ENCODE measurements at regions of chr12 and their contacts with region 1.

Region 1: GRCh38 chr12:110449799-110450497 is at the start of gene ARPC3:
- DNase-seq: peak; percentile 92
- H3K4me3 ChIP-seq: peak within 1 kb of the TSS; percentile 59 to 85 (median 83)
- H3K27ac ChIP-seq: peak within 1 kb of the TSS; percentile 89
- H3K4me1 ChIP-seq: peaks cover 5% of the 10 kb centered on the region
- H3K27me3 ChIP-seq: no peaks in the 10 kb centered on the region
- CTCF ChIP-seq: peak; percentile 87 to 89
- POLR2A ChIP-seq: peak; percentile 86
- total RNA-seq, gene ARPC3: 304 and 308 TPM in 2 replicates

Region 2: GRCh38 chr12:110039085-110039807 is 410.7 kb before region 1 on chr12:
- CTCF ChIA-PET with region 1: no interaction called
- POLR2A ChIA-PET with region 1: no interaction called
- dilution Hi-C with region 1: no loop called
- intact Hi-C with region 1: no loop called
- DNase-seq: peak; percentile 74
- H3K4me3 ChIP-seq: no peak overlapping the region
- H3K27ac ChIP-seq: peak overlapping the region; percentile 90
- H3K4me1 ChIP-seq: peaks cover 29% of the 10 kb centered on the region
- H3K27me3 ChIP-seq: no peaks in the 10 kb centered on the region
- CTCF ChIP-seq: no peak
- POLR2A ChIP-seq: no peak

Region 3: DNA sequence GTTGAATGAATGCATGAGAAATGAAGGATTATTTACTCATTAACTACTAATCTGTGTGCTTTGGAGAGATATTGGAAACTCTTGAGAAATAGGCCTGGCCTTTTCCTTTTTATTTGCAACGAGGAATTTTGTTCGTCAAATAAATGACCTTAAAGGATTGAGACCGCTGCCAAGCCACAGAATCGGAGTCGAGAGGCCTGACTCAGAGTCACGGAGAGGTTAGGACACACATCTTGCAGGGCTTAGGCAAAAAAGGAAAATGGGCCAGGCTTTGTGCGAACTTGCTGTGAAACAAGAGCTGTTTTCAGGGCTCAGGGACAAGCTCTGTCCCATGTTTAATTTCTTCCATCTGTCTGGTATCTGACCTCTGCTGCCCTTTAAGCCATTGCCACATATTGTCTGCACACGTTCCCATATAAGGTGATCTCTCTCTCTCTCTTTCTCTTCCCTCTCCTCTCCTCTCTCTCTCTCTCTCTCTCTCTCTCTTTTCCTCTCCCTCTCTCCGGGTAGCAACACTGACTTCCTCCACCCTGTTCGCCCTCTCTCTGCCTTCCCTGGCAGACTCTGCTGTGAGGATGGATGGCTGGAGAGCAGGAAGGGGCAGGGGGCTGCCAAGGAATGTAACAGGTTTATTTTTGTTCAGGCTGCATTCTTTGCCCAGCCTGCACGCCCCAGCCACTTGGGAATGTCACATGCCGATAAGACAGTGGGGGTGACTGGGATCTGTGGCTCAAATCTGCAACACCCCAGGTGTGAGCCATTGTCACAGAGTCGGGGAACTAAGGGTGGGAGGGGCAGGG is 340.7 kb before region 1 on chr12:
- CTCF ChIA-PET with region 1: no interaction called
- POLR2A ChIA-PET with region 1: no interaction called
- dilution Hi-C with region 1: no loop called
- intact Hi-C with region 1: no loop called
- DNase-seq: peak; percentile 81
- H3K4me3 ChIP-seq: no peak overlapping the region
- H3K27ac ChIP-seq: no peak overlapping the region
- H3K4me1 ChIP-seq: peaks cover 15% of the 10 kb centered on the region
- H3K27me3 ChIP-seq: no peaks in the 10 kb centered on the region
- CTCF ChIP-seq: no peak
- POLR2A ChIP-seq: no peak

Region 4: DNA sequence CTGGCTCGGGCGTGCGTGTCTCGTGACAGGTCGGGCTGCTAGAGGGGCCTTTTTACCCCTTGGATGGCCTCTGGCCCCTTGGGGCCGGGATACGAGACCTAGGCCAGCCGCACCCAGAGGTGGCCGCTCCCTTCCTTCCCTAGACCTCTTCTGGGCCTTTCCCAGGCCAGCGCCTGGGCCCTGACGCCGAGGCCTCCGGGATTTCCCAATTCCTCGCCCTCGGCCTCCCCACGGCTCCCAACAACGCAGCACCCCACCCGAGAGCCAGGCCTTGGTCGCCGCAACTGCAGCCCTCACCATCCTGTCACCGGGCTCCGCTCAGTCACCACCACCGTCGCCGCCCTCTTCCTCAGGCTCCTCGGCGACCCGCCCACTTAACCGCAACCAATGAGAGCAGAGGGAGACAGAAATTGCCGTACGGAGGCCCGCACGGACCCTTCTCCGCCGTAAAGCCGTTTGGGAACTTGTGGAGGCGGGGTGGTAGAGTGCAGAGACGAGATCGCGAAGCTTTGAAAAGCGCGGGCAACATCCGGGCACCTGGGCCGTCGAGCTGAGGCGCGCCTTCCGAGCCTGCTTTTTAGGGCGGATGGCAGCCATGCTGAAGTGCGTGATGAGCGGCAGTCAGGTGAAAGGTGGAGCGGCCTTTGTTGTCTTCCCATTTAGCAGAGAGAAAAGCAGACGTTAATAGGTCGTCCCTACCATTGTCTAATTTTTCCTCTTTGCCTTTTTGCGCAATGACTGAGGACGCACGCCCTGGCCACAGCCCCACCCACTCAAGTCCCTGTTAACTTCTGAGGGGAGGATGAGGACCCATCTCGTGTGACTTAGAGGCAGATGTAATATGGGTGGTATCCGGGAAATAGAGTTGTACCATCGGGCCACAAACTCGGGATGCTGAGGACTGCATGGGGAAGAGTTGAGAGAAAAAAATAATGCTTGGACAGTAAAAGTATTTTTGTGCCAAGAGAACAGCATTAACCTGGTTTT is 52.1 kb after region 1 on chr12 and contains the starts of genes RAD9B and VPS29:
- CTCF ChIA-PET with region 1: interaction called, 3 read pairs
- POLR2A ChIA-PET with region 1: no interaction called
- dilution Hi-C with region 1: no loop called
- intact Hi-C with region 1: loop called (anchors 1 kb)
- DNase-seq: peak; percentile 99
- H3K4me3 ChIP-seq: peak within 1 kb of the TSS; percentile 58 to 94 (median 80)
- H3K27ac ChIP-seq: peak within 1 kb of the TSS; percentile 68
- H3K4me1 ChIP-seq: peaks cover 13% of the 10 kb centered on the region
- H3K27me3 ChIP-seq: no peaks in the 10 kb centered on the region
- CTCF ChIP-seq: no peak
- POLR2A ChIP-seq: peak; percentile 86
- total RNA-seq, gene RAD9B: 0.15 TPM in 1 of 2 replicates, not detected in the other
- total RNA-seq, gene VPS29: 147 and 155 TPM in 2 replicates

Region 5: GRCh38 chr12:110543252-110543959 is 93.5 kb after region 1 on chr12:
- CTCF ChIA-PET with region 1: interaction called, 5 read pairs
- POLR2A ChIA-PET with region 1: no interaction called
- dilution Hi-C with region 1: no loop called
- intact Hi-C with region 1: loop called (anchors 1 kb)
- DNase-seq: peak; percentile 88
- H3K4me3 ChIP-seq: no peak overlapping the region
- H3K27ac ChIP-seq: peak overlapping the region; percentile 25
- H3K4me1 ChIP-seq: peaks cover 61% of the 10 kb centered on the region
- H3K27me3 ChIP-seq: no peaks in the 10 kb centered on the region
- CTCF ChIP-seq: no peak
- POLR2A ChIP-seq: peak; percentile 22

Region 6: GRCh38 chr12:110698171-110698902 is 248.4 kb after region 1 on chr12:
- CTCF ChIA-PET with region 1: no interaction called
- POLR2A ChIA-PET with region 1: no interaction called
- dilution Hi-C with region 1: no loop called
- intact Hi-C with region 1: loop called (anchors 1 kb)
- DNase-seq: peak; percentile 92
- H3K4me3 ChIP-seq: no peak overlapping the region
- H3K27ac ChIP-seq: peak overlapping the region; percentile 36
- H3K4me1 ChIP-seq: peaks cover 5% of the 10 kb centered on the region
- H3K27me3 ChIP-seq: no peaks in the 10 kb centered on the region
- CTCF ChIP-seq: peak; percentile 67 to 81
- POLR2A ChIP-seq: peak; percentile 24

Region 7: DNA sequence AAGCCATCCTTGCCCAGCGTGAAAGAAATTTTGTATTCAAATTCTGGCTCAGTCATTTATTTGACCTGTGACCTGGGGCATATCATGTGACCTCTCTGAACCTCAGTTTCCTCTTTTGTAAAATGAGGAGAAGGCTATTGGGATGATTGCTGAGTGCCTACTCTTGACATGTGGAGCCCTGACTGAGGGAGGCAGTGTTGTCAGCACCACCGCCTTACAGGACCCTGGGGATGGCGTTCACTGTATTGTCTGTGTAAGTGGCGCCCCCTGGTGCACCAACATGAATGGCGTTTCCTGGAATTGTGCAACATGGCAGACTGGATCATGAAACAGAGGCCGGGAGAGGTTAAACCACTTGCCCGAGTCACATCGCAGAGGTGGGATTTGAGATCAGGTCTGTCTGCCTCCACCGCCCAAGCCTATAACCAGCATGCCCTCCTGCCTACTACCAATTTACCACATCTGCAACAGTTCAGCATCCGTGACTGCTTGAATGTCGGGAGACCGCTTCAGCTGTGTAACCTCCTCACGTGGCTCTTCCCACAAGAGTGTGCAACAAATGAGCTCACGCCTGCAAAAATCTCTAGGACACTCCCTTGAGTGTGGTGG is 376.7 kb after region 1 on chr12:
- CTCF ChIA-PET with region 1: interaction called, 11 read pairs
- POLR2A ChIA-PET with region 1: no interaction called
- dilution Hi-C with region 1: no loop called
- intact Hi-C with region 1: loop called (anchors 1 kb)
- DNase-seq: peak; percentile 74
- H3K4me3 ChIP-seq: no peak overlapping the region
- H3K27ac ChIP-seq: no peak overlapping the region
- H3K4me1 ChIP-seq: no peaks in the 10 kb centered on the region
- H3K27me3 ChIP-seq: no peaks in the 10 kb centered on the region
- CTCF ChIP-seq: peak; percentile 74 to 77
- POLR2A ChIP-seq: no peak

Region 8: DNA sequence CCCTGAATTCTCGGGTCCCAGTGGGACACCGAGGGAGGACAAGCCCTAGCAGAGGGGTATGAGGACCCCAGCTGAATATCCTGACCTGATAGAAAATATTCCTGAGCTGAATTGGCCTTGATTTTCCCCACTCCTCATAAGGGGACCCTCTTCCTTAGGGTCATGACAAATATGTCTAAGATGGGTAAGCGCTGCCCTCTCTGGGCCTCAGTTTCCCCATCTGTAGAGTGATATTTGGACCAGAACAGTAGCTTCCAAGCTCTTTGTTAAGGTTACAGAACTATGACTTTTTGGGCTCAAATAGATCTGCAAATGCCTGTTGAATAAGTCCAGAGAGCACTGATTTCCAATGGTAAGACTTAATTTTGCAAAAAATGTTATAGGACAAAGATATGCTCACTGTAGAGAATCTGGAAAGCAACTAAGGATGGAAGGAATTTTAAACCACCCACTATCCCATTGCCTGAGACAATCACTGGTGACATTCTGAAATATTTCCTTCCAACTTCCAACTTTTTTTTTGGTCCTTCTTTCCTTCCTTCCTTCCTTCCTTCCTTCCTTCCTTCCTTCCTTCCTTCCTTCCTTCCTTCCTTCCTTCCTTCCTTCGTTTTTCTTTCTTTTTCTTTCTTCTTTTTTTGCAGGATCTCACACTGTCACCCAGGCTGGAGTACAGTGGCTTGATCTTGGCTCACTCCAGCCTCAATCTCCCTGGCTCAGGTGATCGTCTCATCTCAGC is 438.5 kb after region 1 on chr12:
- CTCF ChIA-PET with region 1: interaction called, 10 read pairs
- POLR2A ChIA-PET with region 1: no interaction called
- dilution Hi-C with region 1: no loop called
- intact Hi-C with region 1: loop called (anchors 5 kb)
- DNase-seq: no peak
- H3K4me3 ChIP-seq: no peak overlapping the region
- H3K27ac ChIP-seq: no peak overlapping the region
- H3K4me1 ChIP-seq: peaks cover 5% of the 10 kb centered on the region
- H3K27me3 ChIP-seq: peaks cover 0 to 3% of the 10 kb centered on the region in 2 experiments
- CTCF ChIP-seq: no peak
- POLR2A ChIP-seq: no peak